ENCODE measurements at regions of chr7 and their contacts with region 1.

Region 1: DNA sequence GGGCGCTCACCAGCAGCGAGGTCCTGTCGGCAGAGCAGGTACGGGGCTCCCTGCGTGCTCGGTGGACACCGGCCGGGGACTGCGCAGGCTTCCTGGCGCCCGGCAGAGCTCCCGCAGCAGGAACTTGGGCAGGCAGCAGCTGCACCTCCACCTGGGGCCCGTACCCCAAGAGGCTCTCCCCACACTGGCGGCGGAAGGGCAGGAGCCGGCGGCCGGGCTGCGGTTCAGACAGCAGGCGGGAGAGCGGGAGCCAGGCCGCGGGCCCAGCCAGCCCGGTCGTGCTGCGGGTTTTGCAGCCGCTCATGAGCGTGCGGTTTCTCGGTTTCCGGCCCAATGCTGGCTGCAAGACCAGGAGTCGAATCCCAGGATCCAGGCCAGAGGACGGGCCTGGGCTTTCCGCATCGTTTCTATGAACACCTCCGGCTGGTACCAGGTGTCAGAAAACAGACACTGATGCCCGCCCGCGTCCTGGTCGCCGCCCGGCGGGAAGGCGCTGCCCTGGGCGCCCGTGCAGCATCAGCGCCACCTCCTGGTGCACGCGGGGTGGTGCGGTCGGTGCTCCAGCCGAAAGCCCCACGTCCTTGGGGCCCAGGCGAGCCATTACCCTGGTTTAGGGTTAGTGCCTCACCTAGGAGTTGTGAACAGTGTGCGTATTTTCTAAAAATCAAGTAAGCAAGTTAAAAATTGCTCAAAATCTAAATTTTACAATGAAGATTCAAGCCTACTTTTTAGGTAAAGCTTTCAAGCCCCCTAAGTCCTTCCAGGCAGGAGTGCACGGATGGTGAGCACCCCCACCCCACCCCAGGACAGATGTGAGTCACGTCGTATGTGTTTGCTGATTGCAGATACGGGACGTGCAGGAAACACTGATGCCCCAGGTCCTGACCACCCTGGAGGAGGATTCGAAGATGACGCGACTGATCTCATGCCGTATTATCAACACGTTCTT is 47.4 kb upstream of the PRKAR1B start:
- DNase-seq: peak; percentile 30 to 54 (median 51)
- H3K4me3 ChIP-seq: no peak overlapping the region
- H3K27ac ChIP-seq: no peak overlapping the region
- H3K4me1 ChIP-seq: peaks cover 0 to 15% (median 7%) of the 10 kb centered on the region in 4 experiments
- H3K27me3 ChIP-seq: no peaks in the 10 kb centered on the region

Region 2: GRCh38 chr7:322111-322671 is 452.2 kb before region 1 on chr7:
- CTCF ChIA-PET with region 1: interaction called, 13 read pairs
- POLR2A ChIA-PET with region 1: no interaction called
- DNase-seq: peak; percentile 50 to 56 (median 54)
- H3K4me3 ChIP-seq: peak overlapping the region in 2 of 7 experiments; percentile 16 to 26
- H3K27ac ChIP-seq: no peak overlapping the region
- H3K4me1 ChIP-seq: peaks cover 0 to 3% (median 1%) of the 10 kb centered on the region in 4 experiments
- H3K27me3 ChIP-seq: peaks cover 2 to 33% (median 7%) of the 10 kb centered on the region in 5 experiments

Region 3: GRCh38 chr7:954330-955238 is 180.1 kb after region 1 on chr7 and contains the start of gene ADAP1:
- CTCF ChIA-PET with region 1: no interaction called
- POLR2A ChIA-PET with region 1: no interaction called
- DNase-seq: peak; percentile 72 to 84 (median 78)
- H3K4me3 ChIP-seq: peak within 1 kb of the TSS; percentile 28 to 68 (median 55)
- H3K27ac ChIP-seq: no peak within 1 kb of the TSS
- H3K4me1 ChIP-seq: peaks cover 0 to 25% (median 11%) of the 10 kb centered on the region in 4 experiments
- H3K27me3 ChIP-seq: peaks cover 0 to 19% (median 0%) of the 10 kb centered on the region in 5 experiments